Heart right ventricle (tissue), 16 donors: ENCODE measurements at regions of chr20 and their contacts with region 1.

Region 1: DNA sequence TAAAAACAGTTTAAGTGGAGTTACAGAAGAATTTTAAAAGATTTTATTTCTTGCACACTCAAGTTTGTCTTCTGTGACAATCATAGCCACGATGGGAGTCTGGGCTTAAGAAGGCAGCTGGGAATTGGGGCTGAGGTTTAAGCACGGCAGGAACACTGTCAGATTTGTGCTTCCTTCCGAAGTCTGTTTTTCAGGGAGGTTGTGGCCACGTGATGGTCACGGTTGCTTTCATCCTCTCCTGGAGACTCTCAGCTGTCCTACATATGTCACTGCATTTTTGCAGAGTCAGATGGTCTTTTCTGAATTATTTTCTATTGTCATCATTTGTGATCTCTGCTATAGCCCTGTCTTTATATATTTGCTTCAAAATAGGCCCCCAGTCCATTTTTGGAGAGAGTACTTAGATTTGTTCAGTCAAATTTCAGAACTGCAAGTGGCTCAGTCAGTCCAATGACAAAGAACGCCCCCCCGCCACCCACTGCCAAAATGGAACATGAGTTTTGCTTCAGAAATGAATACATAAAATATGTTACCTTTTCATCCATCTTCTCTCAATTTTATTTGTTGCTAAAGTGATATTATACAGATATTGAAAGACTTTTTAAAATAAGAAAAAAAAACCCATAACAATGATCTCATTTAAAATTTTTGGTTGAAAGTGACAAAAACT is 111.8 kb upstream of the ZFP64 start:
- DNase-seq: no peak
- ATAC-seq: no peak
- H3K4me3 ChIP-seq: no peak overlapping the region
- H3K27ac ChIP-seq: no peak overlapping the region
- H3K4me1 ChIP-seq: no peaks in the 10 kb centered on the region
- H3K27me3 ChIP-seq: peaks cover 0 to 11% (median 0%) of the 10 kb centered on the region in 7 donors
- CTCF ChIP-seq: no peak

Region 2: DNA sequence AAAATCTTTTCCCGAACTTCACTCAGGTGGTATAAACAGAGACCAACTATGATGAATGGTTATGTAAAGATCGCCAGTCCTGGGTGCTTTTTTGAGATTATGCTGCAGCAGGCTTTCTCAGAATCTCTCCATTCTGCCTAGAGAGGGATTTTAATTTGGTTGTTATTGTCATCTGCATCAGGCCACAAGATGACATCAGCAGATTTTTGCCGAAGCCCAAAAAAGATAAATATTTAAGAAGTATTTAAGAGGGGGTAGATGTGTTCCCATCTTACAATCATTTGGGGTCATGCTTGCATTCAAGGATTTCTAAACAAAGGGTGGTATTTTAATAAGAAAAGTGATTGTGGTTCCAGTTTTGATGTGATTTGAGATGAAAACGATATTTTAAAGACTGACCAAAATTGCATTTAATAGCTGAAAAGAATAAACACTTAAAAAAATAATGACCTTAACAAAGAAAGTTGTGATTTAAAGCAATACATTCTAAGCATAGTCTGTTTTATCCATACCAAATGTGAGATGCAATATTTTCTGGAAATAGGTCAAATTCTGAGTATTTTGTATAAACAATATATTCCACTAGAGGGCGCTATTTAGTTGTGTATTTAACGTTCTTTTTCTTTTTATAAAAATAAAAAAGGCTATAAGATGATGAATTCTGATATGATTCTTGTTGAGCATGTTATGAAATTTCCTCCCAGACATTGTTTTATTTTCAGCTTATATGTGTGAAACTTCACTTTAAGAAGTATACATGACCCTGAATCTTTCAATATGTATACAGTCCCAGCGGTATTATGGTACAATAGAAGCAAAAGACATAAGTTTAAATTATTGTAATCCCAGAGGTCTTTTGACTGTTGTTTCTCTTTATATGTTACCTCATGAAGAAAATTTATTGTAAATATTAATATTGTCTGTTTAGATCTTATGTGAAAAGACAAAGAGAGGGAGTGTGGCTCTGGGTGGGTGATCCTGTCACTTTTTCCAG is 60.9 kb before region 1 on chr20:
- intact Hi-C with region 1: no loop called
- DNase-seq: no peak
- ATAC-seq: no peak
- H3K4me3 ChIP-seq: no peak overlapping the region
- H3K27ac ChIP-seq: no peak overlapping the region
- H3K4me1 ChIP-seq: no peaks in the 10 kb centered on the region
- H3K27me3 ChIP-seq: peaks cover 0 to 18% (median 6%) of the 10 kb centered on the region in 7 donors
- CTCF ChIP-seq: peak; percentile 54 to 78 (median 69)

Region 3: GRCh38 chr20:52263757-52264156 is 39.7 kb before region 1 on chr20:
- intact Hi-C with region 1: no loop called
- DNase-seq: no peak
- ATAC-seq: no peak
- H3K4me3 ChIP-seq: no peak overlapping the region
- H3K27ac ChIP-seq: no peak overlapping the region
- H3K4me1 ChIP-seq: no peaks in the 10 kb centered on the region
- H3K27me3 ChIP-seq: peaks cover 0 to 30% (median 6%) of the 10 kb centered on the region in 7 donors
- CTCF ChIP-seq: no peak

Region 4: GRCh38 chr20:52291109-52291508 is 12.3 kb before region 1 on chr20:
- intact Hi-C with region 1: no loop called
- DNase-seq: no peak
- ATAC-seq: no peak
- H3K4me3 ChIP-seq: no peak overlapping the region
- H3K27ac ChIP-seq: no peak overlapping the region
- H3K4me1 ChIP-seq: no peaks in the 10 kb centered on the region
- H3K27me3 ChIP-seq: peaks cover 0 to 2% (median 0%) of the 10 kb centered on the region in 7 donors
- CTCF ChIP-seq: no peak

Region 5: DNA sequence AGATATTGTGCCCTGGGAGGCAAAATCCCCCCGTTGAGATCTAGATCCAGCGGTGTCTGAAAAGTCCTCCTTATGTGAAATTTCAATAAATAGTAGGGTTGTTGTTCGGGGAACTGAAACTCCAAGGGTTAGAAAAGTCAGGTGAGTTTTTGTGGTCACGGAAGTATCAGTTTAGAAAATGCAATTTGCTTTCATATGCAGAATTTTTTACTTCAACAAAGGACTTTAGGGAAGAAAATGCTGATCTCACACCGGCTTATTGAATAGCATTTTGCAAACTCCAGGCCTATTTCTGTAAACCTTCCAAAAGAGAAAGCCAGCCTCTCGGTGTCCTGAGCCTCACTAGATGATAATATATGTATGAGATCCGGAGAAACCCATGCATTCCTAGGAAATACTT is 923.4 kb after region 1 on chr20:
- intact Hi-C with region 1: loop called in 1 of 10 experiments (anchors 5 kb)
- DNase-seq: no peak
- ATAC-seq: no peak
- H3K4me3 ChIP-seq: no peak overlapping the region
- H3K27ac ChIP-seq: no peak overlapping the region
- H3K4me1 ChIP-seq: no peaks in the 10 kb centered on the region
- H3K27me3 ChIP-seq: peaks cover 0 to 5% (median 0%) of the 10 kb centered on the region in 7 donors
- CTCF ChIP-seq: no peak